ENCODE measurements at regions of chr11 and their contacts with region 1.

Region 1: DNA sequence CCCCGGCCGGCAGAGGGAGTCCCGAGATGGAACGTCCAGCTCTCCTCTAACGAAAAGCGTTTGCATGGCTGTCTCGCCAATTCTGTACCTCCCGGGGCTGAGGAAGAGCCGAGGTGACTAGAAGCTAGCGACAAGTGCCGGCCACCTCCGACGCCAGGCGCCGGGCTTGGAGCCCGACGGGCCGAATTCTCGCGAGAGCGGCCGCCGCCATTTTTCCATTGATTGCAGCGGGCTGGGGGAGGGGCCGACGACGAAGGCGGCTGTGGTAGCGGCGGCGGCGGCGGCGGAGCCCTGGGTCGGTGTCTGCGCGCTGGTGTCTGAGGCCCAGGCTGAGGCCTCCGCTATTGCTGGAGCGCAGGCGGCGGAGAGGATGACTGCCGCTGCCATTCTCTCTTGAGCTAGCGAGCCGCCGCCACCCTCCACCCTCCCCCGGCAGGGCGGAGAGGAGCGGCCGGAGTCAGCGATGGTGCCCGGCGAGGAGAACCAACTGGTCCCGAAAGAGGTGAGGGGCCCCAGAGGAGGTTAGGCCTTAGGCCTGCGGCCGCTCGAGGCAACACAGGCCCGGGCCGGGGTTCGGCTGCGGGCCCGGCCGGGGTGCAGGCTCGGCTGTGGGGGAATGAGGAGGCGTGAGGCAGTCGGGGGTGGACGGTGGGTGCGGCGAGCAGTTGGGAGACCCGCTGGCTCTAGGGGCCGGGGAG is at the start of gene USP47:
- DNase-seq: peak; percentile 95
- H3K4me3 Mint-ChIP-seq: no peak within 1 kb of the TSS
- H3K27ac Mint-ChIP-seq: no peak within 1 kb of the TSS
- H3K4me1 Mint-ChIP-seq: peaks cover 25% of the 10 kb centered on the region
- H3K27me3 Mint-ChIP-seq: no peaks in the 10 kb centered on the region
- total RNA-seq, gene USP47: 58.5 to 64.0 TPM

Region 2: DNA sequence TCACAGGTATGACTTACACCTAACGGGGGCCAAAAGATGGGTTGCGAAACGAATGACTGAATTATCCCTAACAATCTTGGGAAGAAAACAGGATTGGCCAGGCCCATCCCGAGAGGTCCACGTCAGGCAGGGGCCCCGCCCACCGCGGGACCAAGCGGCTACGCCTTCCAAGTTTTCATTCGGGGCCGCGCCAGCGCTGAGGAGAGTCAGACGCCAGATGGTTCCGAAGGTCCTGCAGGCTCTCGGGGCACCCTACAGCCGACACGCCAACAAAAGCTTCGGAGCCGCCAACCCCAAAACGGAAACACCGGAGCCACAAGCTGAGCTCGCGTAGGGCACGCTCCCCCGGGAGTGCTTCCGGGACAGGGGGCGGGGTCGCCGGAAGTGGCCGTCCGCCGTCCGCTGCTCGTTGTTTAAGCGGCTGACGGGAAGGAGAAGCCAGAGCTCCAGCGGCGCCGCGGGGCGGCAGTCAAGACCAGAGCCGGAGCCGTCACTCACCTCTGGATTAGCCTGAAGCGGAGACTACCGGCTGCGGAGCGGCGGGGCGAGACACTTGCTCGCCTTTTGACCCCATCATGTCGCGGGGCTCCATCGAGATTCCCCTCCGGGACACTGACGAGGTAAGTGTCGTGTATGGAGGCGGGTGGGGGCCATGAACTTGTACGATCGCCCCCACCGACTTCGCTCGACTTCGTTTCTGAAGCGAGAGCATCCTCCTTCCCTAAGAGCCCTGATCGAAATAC is 1090.9 kb before region 1 on chr11 and contains the start of gene CTR9:
- CTCF ChIA-PET with region 1: no interaction called
- POLR2A ChIA-PET with region 1: no interaction called
- intact Hi-C with region 1: loop called (anchors 5 kb)
- DNase-seq: peak; percentile 96
- H3K4me3 Mint-ChIP-seq: peak within 1 kb of the TSS; percentile 93
- H3K27ac Mint-ChIP-seq: peak within 1 kb of the TSS; percentile 89
- H3K4me1 Mint-ChIP-seq: peaks cover 25% of the 10 kb centered on the region
- H3K27me3 Mint-ChIP-seq: no peaks in the 10 kb centered on the region
- total RNA-seq, gene CTR9: 37.6 to 39.9 TPM

Region 3: GRCh38 chr11:10925144-10925926 is 916.5 kb before region 1 on chr11:
- CTCF ChIA-PET with region 1: no interaction called
- POLR2A ChIA-PET with region 1: no interaction called
- intact Hi-C with region 1: loop called (anchors 1 kb)
- DNase-seq: no peak
- H3K4me3 Mint-ChIP-seq: no peak overlapping the region
- H3K27ac Mint-ChIP-seq: no peak overlapping the region
- H3K4me1 Mint-ChIP-seq: peaks cover 6% of the 10 kb centered on the region
- H3K27me3 Mint-ChIP-seq: peaks cover 10% of the 10 kb centered on the region

Region 4: DNA sequence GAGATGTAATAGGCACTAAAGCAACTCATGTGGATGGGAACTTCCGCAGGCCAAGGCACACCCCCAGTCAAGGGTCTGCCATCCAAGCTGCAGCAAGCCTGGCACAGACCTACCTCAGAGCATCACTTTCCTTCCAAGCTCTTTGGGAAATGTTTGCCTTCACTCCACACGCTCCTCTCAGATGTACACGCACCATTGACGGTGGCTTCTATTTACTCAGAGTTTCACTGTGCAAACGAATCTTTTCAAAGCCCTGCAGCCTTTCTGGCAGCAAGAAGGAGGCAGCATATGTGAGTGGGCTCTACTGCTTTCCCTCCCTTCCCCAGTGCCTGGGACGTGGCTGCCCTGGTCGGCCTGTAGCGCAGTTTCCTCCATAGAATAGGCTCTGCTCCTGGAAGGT is 61.0 kb before region 1 on chr11:
- CTCF ChIA-PET with region 1: no interaction called
- POLR2A ChIA-PET with region 1: no interaction called
- intact Hi-C with region 1: no loop called
- DNase-seq: no peak
- H3K4me3 Mint-ChIP-seq: no peak overlapping the region
- H3K27ac Mint-ChIP-seq: no peak overlapping the region
- H3K4me1 Mint-ChIP-seq: no peaks in the 10 kb centered on the region
- H3K27me3 Mint-ChIP-seq: peaks cover 17% of the 10 kb centered on the region

Region 5: GRCh38 chr11:11816511-11817319 is 25.2 kb before region 1 on chr11:
- CTCF ChIA-PET with region 1: no interaction called
- POLR2A ChIA-PET with region 1: no interaction called
- intact Hi-C with region 1: no loop called
- DNase-seq: no peak
- H3K4me3 Mint-ChIP-seq: no peak overlapping the region
- H3K27ac Mint-ChIP-seq: no peak overlapping the region
- H3K4me1 Mint-ChIP-seq: no peaks in the 10 kb centered on the region
- H3K27me3 Mint-ChIP-seq: peaks cover 4% of the 10 kb centered on the region

Region 6: DNA sequence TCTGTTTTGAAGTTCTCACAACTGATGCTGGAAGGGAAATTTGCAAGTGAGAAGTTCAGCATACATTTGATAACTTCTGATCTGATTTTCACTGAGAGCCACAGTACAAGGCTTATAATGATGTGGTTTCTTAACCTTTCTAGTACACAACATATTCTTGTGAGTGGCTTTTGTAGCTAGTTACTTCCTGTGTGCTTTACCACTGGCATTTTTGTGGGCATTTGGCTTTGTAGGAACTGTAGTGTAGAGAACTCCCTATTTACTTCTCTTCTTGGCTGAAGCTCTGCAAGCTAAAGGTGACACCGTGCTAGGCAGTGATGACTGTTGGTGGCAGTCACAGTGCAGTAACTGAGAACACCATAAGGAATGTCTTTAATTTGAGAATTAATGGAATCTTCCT is 14.8 kb after region 1 on chr11:
- CTCF ChIA-PET with region 1: interaction called, 5 read pairs
- POLR2A ChIA-PET with region 1: interaction called, 9 read pairs
- intact Hi-C with region 1: loop called (anchors 1 kb)
- DNase-seq: no peak
- H3K4me3 Mint-ChIP-seq: no peak overlapping the region
- H3K27ac Mint-ChIP-seq: peak overlapping the region; percentile 62
- H3K4me1 Mint-ChIP-seq: peaks cover 55% of the 10 kb centered on the region
- H3K27me3 Mint-ChIP-seq: no peaks in the 10 kb centered on the region

Region 7: GRCh38 chr11:12110201-12110713 is 268.4 kb after region 1 on chr11 and contains the start of gene MICAL2:
- CTCF ChIA-PET with region 1: no interaction called
- POLR2A ChIA-PET with region 1: no interaction called
- intact Hi-C with region 1: loop called (anchors 5 kb)
- DNase-seq: peak; percentile 91
- H3K4me3 Mint-ChIP-seq: peak within 1 kb of the TSS; percentile 82
- H3K27ac Mint-ChIP-seq: peak within 1 kb of the TSS; percentile 91
- H3K4me1 Mint-ChIP-seq: peaks cover 40% of the 10 kb centered on the region
- H3K27me3 Mint-ChIP-seq: no peaks in the 10 kb centered on the region
- total RNA-seq, gene MICAL2: 213 to 220 TPM

Region 8: GRCh38 chr11:12224537-12224893 is 382.6 kb after region 1 on chr11:
- CTCF ChIA-PET with region 1: no interaction called
- POLR2A ChIA-PET with region 1: no interaction called
- intact Hi-C with region 1: loop called (anchors 5 kb)
- DNase-seq: peak; percentile 98
- H3K4me3 Mint-ChIP-seq: peak overlapping the region; percentile 78
- H3K27ac Mint-ChIP-seq: peak overlapping the region; percentile 98
- H3K4me1 Mint-ChIP-seq: peaks cover 52% of the 10 kb centered on the region
- H3K27me3 Mint-ChIP-seq: no peaks in the 10 kb centered on the region

Measured in activated CD4-positive, alpha-beta memory T cell treated with anti-CD3 and anti-CD28 coated beads for 36 hours (primary cell).